ENCODE measurements at regions of chr17 and their contacts with region 1.

Region 1: GRCh38 chr17:81034779-81035388 is at the start of gene BAIAP2:
- DNase-seq: peak; percentile 90 to 94 (median 93)
- H3K4me3 ChIP-seq: peak within 1 kb of the TSS; percentile 75 to 97 (median 90)
- H3K4me3 Mint-ChIP-seq: peak within 1 kb of the TSS; percentile 97 to 99
- H3K27ac ChIP-seq: peak within 1 kb of the TSS; percentile 34 to 73
- H3K27ac Mint-ChIP-seq: peak within 1 kb of the TSS; percentile 83 to 93 (median 91)
- H3K4me1 ChIP-seq: peaks cover 52 to 57% of the 10 kb centered on the region in 2 donors
- H3K4me1 Mint-ChIP-seq: peaks cover 54% of the 10 kb centered on the region
- H3K27me3 ChIP-seq: peaks cover 0 to 21% of the 10 kb centered on the region in 2 donors
- H3K27me3 Mint-ChIP-seq: peaks cover 25 to 38% (median 26%) of the 10 kb centered on the region in 3 donors
- CTCF ChIP-seq: no peak
- polyA plus RNA-seq, gene BAIAP2: 8.6 to 17.0 (median 11.2) TPM

Region 2: GRCh38 chr17:81094509-81095382 is 59.9 kb after region 1 on chr17:
- intact Hi-C with region 1: loop called (anchors 2 to 5 kb)
- DNase-seq: peak; percentile 55 to 80 (median 56)
- H3K4me3 ChIP-seq: no peak overlapping the region
- H3K4me3 Mint-ChIP-seq: peak overlapping the region in 1 of 2 donors; percentile 4
- H3K27ac ChIP-seq: no peak overlapping the region
- H3K27ac Mint-ChIP-seq: peak overlapping the region in 6 of 7 donors; percentile 20 to 82 (median 44)
- H3K4me1 ChIP-seq: peaks cover 29 to 33% of the 10 kb centered on the region in 2 donors
- H3K4me1 Mint-ChIP-seq: peaks cover 43% of the 10 kb centered on the region
- H3K27me3 ChIP-seq: peaks cover 0 to 3% of the 10 kb centered on the region in 2 donors
- H3K27me3 Mint-ChIP-seq: peaks cover 3 to 12% (median 8%) of the 10 kb centered on the region in 3 donors
- CTCF ChIP-seq: no peak

Region 3: DNA sequence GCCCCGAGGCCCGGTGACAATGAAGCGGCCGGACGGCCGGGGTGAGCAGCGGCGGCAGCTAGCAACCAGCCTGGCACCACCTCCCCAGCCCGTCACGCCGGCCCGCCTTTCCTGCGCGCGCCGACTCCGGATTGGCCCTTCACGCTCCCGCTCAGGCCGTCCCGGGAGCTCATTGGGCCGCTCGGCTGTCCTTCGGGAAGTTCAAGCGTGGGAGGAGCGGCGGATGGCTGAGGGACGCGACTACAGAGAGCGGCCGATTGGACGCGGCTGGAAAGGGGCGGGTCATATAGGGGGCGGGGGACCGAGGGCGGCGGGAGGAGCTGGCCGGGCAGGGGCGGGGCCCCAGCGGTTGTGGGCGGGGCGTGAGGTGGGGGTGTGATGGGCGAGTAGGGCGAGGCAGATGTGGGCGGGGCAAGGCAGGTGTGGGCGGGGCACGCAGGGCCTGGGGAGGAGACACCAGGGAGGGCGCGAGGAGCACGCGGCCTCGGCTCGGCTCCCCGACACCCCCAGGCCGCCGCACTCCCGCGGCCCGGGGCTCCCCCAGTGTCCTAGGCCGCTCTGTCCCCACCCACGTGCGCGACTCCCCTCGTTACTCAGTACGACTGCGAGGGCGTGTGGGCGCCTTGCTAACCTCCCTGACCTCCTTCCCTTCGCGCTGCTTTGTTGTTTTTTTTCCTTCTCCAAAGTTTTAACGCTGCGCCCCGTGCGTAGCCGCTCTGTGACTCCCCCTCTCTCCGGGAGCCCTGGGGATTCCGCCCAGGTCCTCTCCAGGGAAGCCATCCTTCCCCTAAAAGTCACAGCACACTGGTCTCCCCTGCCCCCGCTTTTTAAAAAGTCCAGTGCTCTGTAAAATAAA is 188.2 kb after region 1 on chr17 and contains the start of gene CEP131:
- intact Hi-C with region 1: loop called in 1 of 2 experiments (anchors 10 kb)
- DNase-seq: peak; percentile 97 to 98 (median 98)
- H3K4me3 ChIP-seq: peak within 1 kb of the TSS; percentile 43 to 86 (median 48)
- H3K4me3 Mint-ChIP-seq: peak within 1 kb of the TSS; percentile 78 to 92
- H3K27ac ChIP-seq: peak within 1 kb of the TSS; percentile 30 to 76
- H3K27ac Mint-ChIP-seq: peak within 1 kb of the TSS; percentile 70 to 91 (median 86)
- H3K4me1 ChIP-seq: peaks cover 31 to 42% of the 10 kb centered on the region in 2 donors
- H3K4me1 Mint-ChIP-seq: peaks cover 32% of the 10 kb centered on the region
- H3K27me3 ChIP-seq: no peaks in the 10 kb centered on the region
- H3K27me3 Mint-ChIP-seq: peaks cover 0 to 4% (median 0%) of the 10 kb centered on the region in 3 donors
- CTCF ChIP-seq: no peak
- polyA plus RNA-seq, gene CEP131: 0.69 to 9.7 (median 1.0) TPM